Activated CD4-positive, alpha-beta T cell treated with anti-CD3 and anti-CD28 coated beads for 36 hours (primary cell): ENCODE measurements at regions of chr4 and their contacts with region 1.

Region 1: GRCh38 chr4:51842554-51843308 is at the start of gene DCUN1D4:
- DNase-seq: peak; percentile 99
- ATAC-seq: peak; percentile 92
- H3K4me3 Mint-ChIP-seq: peak within 1 kb of the TSS; percentile 84
- H3K27ac Mint-ChIP-seq: peak within 1 kb of the TSS; percentile 90
- H3K4me1 Mint-ChIP-seq: peaks cover 18% of the 10 kb centered on the region
- H3K27me3 Mint-ChIP-seq: no peaks in the 10 kb centered on the region
- total RNA-seq, gene DCUN1D4: 31.2 to 41.2 TPM

Region 2: DNA sequence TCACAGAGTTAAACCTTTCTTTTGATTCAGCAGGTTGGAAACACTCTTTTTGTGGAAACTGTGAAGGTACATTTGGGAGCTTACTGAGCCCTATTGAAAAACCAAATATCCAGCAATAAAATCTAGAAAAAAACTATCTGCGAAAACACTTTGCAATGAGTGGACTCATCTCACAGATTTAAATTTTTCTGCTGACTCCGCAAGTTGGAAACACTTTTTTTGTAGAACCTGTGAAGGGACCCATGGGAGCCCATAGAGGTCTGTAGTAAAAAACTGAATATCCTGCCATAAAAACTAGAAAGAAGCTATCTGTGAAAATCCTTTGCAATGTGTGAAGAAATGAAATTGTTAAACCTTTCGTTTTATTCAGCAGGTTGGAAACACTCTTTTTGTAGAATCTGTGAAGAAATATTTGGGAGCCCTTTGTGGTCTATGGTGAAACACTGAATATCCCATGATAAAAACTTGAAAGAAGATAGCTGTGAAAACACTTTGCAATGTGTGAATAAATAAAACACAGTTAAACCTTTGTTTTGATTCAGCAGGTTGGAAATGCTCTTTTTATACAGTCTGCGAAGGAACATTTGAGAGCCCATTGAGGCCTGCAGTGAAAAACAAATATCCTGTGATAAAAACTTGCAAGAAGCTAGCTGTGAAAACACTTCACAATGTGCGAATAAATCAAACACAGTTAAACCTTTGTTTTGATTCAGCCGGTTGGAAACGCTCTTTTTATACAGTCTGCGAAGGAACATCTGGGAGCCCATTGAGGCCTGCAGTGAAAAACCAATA is 22.1 kb before region 1 on chr4:
- CTCF ChIA-PET with region 1: no interaction called
- POLR2A ChIA-PET with region 1: no interaction called
- intact Hi-C with region 1: no loop called
- DNase-seq: no peak
- ATAC-seq: no peak
- H3K4me3 Mint-ChIP-seq: no peak overlapping the region
- H3K27ac Mint-ChIP-seq: no peak overlapping the region
- H3K4me1 Mint-ChIP-seq: no peaks in the 10 kb centered on the region
- H3K27me3 Mint-ChIP-seq: no peaks in the 10 kb centered on the region

Region 3: GRCh38 chr4:51858607-51859202 is 16.0 kb after region 1 on chr4:
- CTCF ChIA-PET with region 1: interaction called, 3 read pairs
- POLR2A ChIA-PET with region 1: interaction called, 3 read pairs
- intact Hi-C with region 1: loop called in 1 of 2 experiments (anchors 2 kb)
- DNase-seq: no peak
- ATAC-seq: no peak
- H3K4me3 Mint-ChIP-seq: no peak overlapping the region
- H3K27ac Mint-ChIP-seq: no peak overlapping the region
- H3K4me1 Mint-ChIP-seq: peaks cover 26% of the 10 kb centered on the region
- H3K27me3 Mint-ChIP-seq: no peaks in the 10 kb centered on the region

Region 4: DNA sequence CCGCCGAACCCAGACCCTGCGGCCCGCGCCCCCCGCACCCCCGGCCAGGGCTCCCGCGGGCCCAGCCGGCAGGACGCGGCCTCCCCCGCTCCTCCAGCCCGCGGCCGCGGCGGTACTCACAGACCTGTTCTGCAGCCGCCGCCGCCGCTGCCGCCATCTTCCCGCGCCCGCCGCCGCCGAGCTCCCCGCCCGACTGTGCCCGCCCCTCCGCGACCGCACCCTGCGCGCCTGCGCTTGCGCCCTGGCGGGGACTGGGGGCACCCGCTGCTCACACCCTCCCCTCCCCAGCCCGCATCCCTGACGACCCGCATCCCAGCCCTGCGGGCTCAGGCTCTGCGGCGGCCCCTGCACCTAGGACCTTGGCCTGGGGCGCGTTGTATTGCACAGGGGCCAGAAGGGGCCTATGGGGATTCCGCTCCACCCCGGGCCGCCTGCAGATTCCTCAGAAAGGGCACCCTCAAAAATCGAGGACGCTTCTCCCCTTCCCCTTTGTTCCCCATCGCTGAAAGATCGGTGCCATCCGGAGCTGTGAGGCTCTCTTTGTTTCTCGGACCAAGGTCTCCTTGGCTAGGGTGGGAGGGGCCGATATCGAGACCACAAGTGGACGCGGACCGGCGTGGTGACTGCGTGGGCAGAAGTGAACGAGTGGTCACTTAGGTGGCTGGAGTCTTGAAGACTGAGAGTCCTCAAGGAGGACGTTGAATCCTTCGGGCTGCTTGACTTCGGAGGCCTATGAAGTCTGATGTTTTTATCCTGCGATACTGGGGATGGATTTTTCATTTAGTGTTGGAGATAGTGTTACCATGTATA is 195.6 kb after region 1 on chr4 and contains the start of gene SGCB:
- CTCF ChIA-PET with region 1: no interaction called
- POLR2A ChIA-PET with region 1: interaction called, 6 read pairs
- intact Hi-C with region 1: loop called (anchors 1 to 5 kb)
- DNase-seq: peak; percentile 85
- ATAC-seq: peak; percentile 96
- H3K4me3 Mint-ChIP-seq: peak within 1 kb of the TSS; percentile 78
- H3K27ac Mint-ChIP-seq: peak within 1 kb of the TSS; percentile 75
- H3K4me1 Mint-ChIP-seq: peaks cover 26% of the 10 kb centered on the region
- H3K27me3 Mint-ChIP-seq: peaks cover 12% of the 10 kb centered on the region
- total RNA-seq, gene SGCB: 12.0 to 14.1 TPM

Region 5: GRCh38 chr4:52861879-52862616 is 1019.3 kb after region 1 on chr4 and contains the start of gene RASL11B:
- CTCF ChIA-PET with region 1: no interaction called
- POLR2A ChIA-PET with region 1: no interaction called
- intact Hi-C with region 1: loop called in 1 of 2 experiments (anchors 5 kb)
- DNase-seq: peak; percentile 91
- ATAC-seq: peak; percentile 99
- H3K4me3 Mint-ChIP-seq: peak within 1 kb of the TSS; percentile 63
- H3K27ac Mint-ChIP-seq: peak within 1 kb of the TSS; percentile 73
- H3K4me1 Mint-ChIP-seq: peaks cover 9% of the 10 kb centered on the region
- H3K27me3 Mint-ChIP-seq: peaks cover 30% of the 10 kb centered on the region
- total RNA-seq, gene RASL11B: 0.23 to 0.25 TPM

Region 6: GRCh38 chr4:53377319-53378170 is 1534.8 kb after region 1 on chr4 and contains the start of gene FIP1L1:
- CTCF ChIA-PET with region 1: no interaction called
- POLR2A ChIA-PET with region 1: no interaction called
- intact Hi-C with region 1: loop called in 1 of 2 experiments (anchors 5 kb)
- DNase-seq: peak; percentile 98
- ATAC-seq: peak; percentile 97
- H3K4me3 Mint-ChIP-seq: peak within 1 kb of the TSS; percentile 99
- H3K27ac Mint-ChIP-seq: peak within 1 kb of the TSS; percentile 97
- H3K4me1 Mint-ChIP-seq: peaks cover 29% of the 10 kb centered on the region
- H3K27me3 Mint-ChIP-seq: no peaks in the 10 kb centered on the region
- total RNA-seq, gene FIP1L1: 72.3 to 96.3 TPM